ENCODE measurements at regions of chr10 and their contacts with region 1.

Region 1: DNA sequence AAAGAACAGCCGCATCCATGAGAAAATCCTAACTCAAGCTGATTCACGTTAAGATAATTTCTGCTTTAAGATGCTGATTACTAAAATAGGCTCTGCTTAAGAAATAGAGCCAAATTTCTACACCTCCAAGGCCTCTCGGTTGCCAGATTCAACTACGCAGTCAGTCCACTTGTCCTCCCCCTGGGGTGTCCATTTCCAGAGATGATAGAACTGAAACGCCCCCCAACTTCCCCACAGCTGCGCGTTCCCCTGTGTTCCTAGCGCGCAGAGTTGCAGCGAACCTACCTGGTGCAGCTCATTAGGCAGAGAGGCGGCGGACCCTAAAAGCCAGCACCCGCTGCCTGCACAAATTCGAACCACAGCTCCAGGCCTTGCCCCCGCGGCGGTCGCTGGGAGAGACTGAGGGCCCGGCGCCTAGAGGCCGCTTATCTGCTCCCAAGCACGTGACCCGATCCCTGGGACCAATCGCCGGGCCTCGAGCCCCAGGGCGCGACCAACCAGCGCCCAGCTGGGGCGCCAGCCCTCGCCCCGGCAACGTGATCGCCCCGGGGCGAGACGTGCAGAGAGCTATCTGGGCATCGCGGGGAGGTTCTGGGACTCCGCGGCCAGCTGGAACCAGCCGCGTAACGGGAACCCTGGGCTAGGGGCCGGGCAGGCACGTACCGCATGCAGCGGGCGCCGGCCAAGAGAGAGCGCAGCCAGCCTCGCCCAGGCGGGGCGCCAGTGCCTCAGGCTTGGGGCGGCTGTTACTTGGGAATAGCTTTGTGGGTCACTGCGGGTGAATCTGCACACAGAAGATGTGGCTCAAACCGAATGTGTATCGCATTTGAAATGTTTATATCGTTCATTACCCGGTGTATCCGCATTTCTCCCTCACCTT is at the start of gene PPP1R3C:
- DNase-seq: peak; percentile 45
- H3K4me3 Mint-ChIP-seq: peak within 1 kb of the TSS; percentile 61
- H3K27ac Mint-ChIP-seq: no peak within 1 kb of the TSS
- H3K4me1 Mint-ChIP-seq: no peaks in the 10 kb centered on the region
- H3K27me3 Mint-ChIP-seq: no peaks in the 10 kb centered on the region
- CTCF ChIP-seq: no peak
- total RNA-seq, gene PPP1R3C: 0.30 and 0.47 TPM in 2 replicates

Region 2: GRCh38 chr10:89942217-89942616 is 1690.7 kb before region 1 on chr10:
- CTCF ChIA-PET with region 1: no interaction called
- POLR2A ChIA-PET with region 1: no interaction called
- intact Hi-C with region 1: no loop called
- DNase-seq: no peak
- H3K4me3 Mint-ChIP-seq: no peak overlapping the region
- H3K27ac Mint-ChIP-seq: no peak overlapping the region
- H3K4me1 Mint-ChIP-seq: peaks cover 12% of the 10 kb centered on the region
- H3K27me3 Mint-ChIP-seq: no peaks in the 10 kb centered on the region
- CTCF ChIP-seq: no peak

Region 3: GRCh38 chr10:91389636-91390512 is 243.0 kb before region 1 on chr10:
- CTCF ChIA-PET with region 1: interaction called, 7 read pairs
- POLR2A ChIA-PET with region 1: no interaction called
- intact Hi-C with region 1: loop called (anchors 1 kb)
- DNase-seq: peak; percentile 77
- H3K4me3 Mint-ChIP-seq: no peak overlapping the region
- H3K27ac Mint-ChIP-seq: no peak overlapping the region
- H3K4me1 Mint-ChIP-seq: no peaks in the 10 kb centered on the region
- H3K27me3 Mint-ChIP-seq: peaks cover 42% of the 10 kb centered on the region
- CTCF ChIP-seq: peak; percentile 60

Region 4: DNA sequence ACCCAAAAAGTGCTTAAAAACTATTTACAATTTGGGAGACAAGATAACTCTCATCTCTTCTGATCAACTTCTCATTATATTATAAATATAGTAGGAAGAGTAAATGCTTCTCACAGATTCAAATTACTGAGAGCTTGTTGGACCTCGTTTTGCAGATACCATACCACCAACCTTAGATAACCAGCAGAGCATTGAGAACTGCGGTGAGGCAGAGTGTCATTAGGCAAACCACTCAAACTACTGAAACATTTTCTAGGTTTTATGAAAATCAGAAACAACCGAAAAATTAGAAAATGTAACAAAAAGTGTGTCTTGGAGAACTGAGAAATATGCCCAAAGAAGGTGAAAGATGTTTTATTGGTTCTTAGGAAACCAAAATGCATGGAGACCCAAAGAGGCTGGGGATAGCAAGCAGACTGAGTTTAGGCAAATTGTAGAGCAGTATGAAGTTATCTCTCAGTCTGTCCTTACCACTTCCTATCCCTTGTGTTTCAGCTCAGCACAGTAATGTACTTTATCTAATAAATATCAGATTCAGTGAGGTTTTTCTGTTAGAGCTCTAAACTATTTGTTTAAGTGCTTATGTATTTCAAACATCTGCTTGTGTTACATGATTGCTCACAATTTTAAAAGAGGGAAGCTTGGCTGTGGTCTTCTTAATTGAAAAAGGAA is 144.9 kb before region 1 on chr10:
- CTCF ChIA-PET with region 1: interaction called, 106 read pairs
- POLR2A ChIA-PET with region 1: interaction called, 18 read pairs
- intact Hi-C with region 1: loop called (anchors 1 kb)
- DNase-seq: no peak
- H3K4me3 Mint-ChIP-seq: no peak overlapping the region
- H3K27ac Mint-ChIP-seq: no peak overlapping the region
- H3K4me1 Mint-ChIP-seq: no peaks in the 10 kb centered on the region
- H3K27me3 Mint-ChIP-seq: no peaks in the 10 kb centered on the region
- CTCF ChIP-seq: no peak

Region 5: GRCh38 chr10:91541481-91541880 is 91.4 kb before region 1 on chr10:
- CTCF ChIA-PET with region 1: interaction called, 13 read pairs
- POLR2A ChIA-PET with region 1: no interaction called
- intact Hi-C with region 1: no loop called
- DNase-seq: no peak
- H3K4me3 Mint-ChIP-seq: no peak overlapping the region
- H3K27ac Mint-ChIP-seq: no peak overlapping the region
- H3K4me1 Mint-ChIP-seq: no peaks in the 10 kb centered on the region
- H3K27me3 Mint-ChIP-seq: no peaks in the 10 kb centered on the region
- CTCF ChIP-seq: no peak

Region 6: GRCh38 chr10:91617073-91617580 is 15.8 kb before region 1 on chr10:
- CTCF ChIA-PET with region 1: interaction called, 36 read pairs
- POLR2A ChIA-PET with region 1: interaction called, 6 read pairs
- intact Hi-C with region 1: no loop called
- DNase-seq: peak; percentile 76
- H3K4me3 Mint-ChIP-seq: peak overlapping the region; percentile 60
- H3K27ac Mint-ChIP-seq: peak overlapping the region; percentile 87
- H3K4me1 Mint-ChIP-seq: peaks cover 27% of the 10 kb centered on the region
- H3K27me3 Mint-ChIP-seq: no peaks in the 10 kb centered on the region
- CTCF ChIP-seq: no peak

Region 7: DNA sequence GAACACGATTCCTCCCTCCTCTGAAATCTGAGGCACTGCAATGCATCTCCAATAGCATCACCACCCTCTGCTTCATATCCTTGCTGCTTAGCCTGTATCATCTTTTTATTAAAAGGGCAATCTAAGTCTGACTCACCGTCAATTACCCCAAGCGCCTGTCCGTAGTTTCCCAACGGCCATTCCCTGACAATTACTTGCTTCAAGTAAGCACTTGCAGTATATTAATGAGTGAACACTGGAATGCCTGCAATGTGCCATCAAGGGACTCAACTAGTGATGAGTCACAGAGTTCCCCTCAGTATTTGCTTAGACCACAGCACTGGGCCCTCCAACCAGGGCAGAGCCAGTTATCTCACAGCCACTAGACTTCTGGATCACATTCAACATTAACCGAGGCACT is 19.5 kb after region 1 on chr10:
- CTCF ChIA-PET with region 1: interaction called, 38 read pairs
- POLR2A ChIA-PET with region 1: interaction called, 5 read pairs
- intact Hi-C with region 1: no loop called
- DNase-seq: peak; percentile 88
- H3K4me3 Mint-ChIP-seq: no peak overlapping the region
- H3K27ac Mint-ChIP-seq: peak overlapping the region; percentile 68
- H3K4me1 Mint-ChIP-seq: peaks cover 25% of the 10 kb centered on the region
- H3K27me3 Mint-ChIP-seq: no peaks in the 10 kb centered on the region
- CTCF ChIP-seq: no peak

Region 8: DNA sequence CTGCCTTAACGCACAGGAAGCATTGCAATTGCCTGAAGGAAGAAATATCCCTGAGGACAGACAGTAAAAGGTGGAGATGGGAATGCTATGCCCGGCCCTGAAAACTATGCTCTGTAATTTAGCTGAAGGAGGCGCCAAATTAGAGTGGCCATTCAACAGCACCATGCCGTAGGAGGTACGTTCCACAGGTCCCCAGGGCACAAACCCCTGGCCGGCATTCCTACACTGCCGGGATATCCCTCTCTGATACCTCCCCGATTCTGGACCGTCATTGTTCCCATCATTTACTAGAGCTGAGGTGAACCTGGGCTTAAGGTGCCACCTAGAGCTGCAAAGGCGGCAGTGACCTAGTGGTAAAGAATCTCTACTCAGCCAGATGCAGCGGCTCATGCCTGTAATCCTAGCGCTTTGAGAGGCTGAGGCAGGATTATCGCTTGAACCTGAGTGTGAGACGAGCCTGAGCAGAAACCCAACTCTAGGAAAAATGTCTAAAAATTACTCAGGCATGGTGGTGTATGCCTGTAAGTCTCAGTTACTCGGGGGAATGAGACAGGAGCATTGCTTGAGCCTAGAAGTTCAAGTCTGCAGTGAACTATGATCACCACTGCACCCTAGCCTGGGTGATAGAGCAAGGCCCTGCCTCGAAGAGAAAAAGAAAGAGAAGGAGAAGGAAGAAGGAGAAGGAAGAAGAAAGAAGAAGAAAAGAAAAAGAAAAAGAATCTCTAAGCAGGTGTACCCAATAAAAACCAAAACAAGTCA is 112.3 kb after region 1 on chr10:
- CTCF ChIA-PET with region 1: interaction called, 5 read pairs
- POLR2A ChIA-PET with region 1: no interaction called
- intact Hi-C with region 1: loop called (anchors 1 kb)
- DNase-seq: peak; percentile 76
- H3K4me3 Mint-ChIP-seq: no peak overlapping the region
- H3K27ac Mint-ChIP-seq: no peak overlapping the region
- H3K4me1 Mint-ChIP-seq: no peaks in the 10 kb centered on the region
- H3K27me3 Mint-ChIP-seq: peaks cover 48% of the 10 kb centered on the region
- CTCF ChIP-seq: peak; percentile 59

Region 9: DNA sequence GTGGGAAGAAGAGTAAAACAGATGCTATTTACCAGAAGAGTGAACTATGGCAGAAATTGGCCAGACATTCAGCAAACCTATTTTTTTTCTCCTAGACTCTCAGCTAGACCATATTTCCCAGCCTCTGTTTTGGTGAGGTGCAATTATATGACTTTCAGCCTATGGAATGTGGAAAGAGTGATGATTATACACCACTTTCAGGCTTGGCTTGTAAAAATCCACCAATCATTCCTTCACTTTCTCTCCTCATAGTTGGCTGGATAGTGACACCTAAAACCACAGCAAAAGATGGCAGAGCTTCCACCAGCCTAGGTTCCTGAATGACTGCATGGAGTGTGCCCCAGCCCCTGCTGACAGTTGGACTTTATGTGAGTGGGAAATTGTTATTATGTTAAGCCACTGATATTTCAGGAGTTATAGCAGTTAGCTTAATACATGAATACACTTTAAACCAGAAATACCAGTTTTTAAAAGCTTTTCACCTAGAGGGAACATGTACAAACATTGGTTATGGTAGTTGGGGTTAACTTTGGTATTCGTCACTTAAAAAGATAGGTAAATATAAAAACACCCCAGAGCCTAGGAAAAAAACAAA is 146.2 kb after region 1 on chr10:
- CTCF ChIA-PET with region 1: no interaction called
- POLR2A ChIA-PET with region 1: no interaction called
- intact Hi-C with region 1: no loop called
- DNase-seq: no peak
- H3K4me3 Mint-ChIP-seq: no peak overlapping the region
- H3K27ac Mint-ChIP-seq: no peak overlapping the region
- H3K4me1 Mint-ChIP-seq: no peaks in the 10 kb centered on the region
- H3K27me3 Mint-ChIP-seq: peaks cover 37% of the 10 kb centered on the region
- CTCF ChIP-seq: no peak

Region 10: DNA sequence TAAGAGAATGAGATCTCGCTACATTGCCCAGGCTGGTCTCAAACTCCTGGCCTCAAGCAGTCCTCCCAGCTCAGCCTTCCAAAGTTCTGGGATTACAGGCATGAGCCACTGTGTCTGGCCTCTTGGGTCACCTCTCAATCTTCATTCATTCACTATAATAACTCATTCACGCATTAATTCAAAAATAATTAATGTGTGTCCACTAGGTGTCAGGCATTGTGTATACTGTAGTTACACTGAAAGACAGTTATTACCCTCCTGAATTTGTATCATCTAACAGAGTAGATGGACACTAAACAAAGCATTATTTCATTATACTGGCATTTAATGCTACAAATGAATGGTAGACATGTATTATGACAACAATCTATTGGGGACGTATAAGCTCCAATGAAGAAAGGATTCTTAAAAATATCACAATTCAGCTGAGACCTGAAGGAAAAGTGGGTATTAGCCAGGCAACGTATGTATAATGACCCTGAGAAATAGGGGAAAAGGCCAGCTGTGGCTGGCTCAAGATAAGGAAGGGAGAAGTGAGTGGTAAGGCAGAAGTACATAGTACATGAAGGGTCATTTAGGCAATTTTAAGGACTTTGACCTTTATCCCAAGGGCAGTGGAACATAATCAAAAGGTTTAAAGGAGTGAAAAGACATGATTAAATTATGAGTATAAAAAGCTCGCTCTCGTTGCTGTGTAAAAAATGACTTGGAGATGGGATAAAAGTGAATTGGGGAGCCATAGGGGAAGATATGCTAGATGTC is 441.4 kb after region 1 on chr10:
- CTCF ChIA-PET with region 1: no interaction called
- POLR2A ChIA-PET with region 1: no interaction called
- intact Hi-C with region 1: no loop called
- DNase-seq: peak; percentile 29
- H3K4me3 Mint-ChIP-seq: no peak overlapping the region
- H3K27ac Mint-ChIP-seq: no peak overlapping the region
- H3K4me1 Mint-ChIP-seq: peaks cover 7% of the 10 kb centered on the region
- H3K27me3 Mint-ChIP-seq: no peaks in the 10 kb centered on the region
- CTCF ChIP-seq: peak; percentile 30

Measured in MCF 10A (cell line).